HepG2 (cell line): ENCODE measurements at regions of chr6 and their contacts with region 1.

Region 1: DNA sequence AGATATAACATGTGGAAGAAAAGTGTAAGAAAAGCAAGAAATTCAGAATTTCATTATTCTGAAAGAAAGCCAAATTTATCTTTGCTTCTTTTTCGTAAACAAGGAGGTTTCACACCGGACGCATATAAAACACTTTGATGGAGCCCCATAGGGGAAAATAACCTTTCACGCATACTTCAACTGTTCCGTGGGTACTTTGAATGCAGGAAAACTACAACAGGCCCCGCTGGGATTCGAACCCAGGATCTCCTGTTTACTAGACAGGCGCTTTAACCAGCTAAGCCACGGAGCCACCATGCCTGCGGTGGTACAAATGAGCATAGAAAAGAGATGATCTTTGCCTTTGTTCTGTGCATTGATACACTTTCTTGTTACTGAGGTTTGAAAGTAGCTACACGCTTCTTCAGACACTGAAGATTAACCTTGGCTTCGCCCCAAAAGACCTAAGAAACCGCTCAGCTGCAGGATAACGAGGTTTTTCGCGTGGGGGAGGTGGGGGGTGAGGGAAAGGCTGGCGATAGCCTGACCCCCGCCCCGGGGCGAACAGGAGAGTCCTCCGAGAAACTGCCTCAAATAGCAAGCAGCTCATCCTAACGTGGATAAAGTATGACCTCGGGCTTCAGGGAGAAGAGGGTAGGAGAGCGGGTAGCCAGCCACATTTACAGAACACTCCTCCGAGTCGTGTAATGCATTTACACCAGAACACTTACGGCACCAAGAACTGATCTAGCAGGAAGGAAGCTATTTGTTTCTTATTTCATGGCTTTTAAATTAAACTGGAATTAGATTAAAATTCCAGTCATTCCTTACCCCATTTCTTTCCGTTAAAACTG is 5.3 kb upstream of the HMGN4 start:
- DNase-seq: peak; percentile 91
- ATAC-seq: peak; percentile 47
- H3K4me3 ChIP-seq: peak overlapping the region; percentile 67 to 78 (median 77)
- H3K27ac ChIP-seq: peak overlapping the region; percentile 56
- H3K4me1 ChIP-seq: peaks cover 37% of the 10 kb centered on the region
- H3K27me3 ChIP-seq: no peaks in the 10 kb centered on the region
- CTCF ChIP-seq: no peak
- EP300 ChIP-seq: 0 out of 4 replicates have a peak, but pooled peaks of 1 of the 2 experiments have one; percentile 47
- POLR2A ChIP-seq: no peak
- RAD21 ChIP-seq: peak; percentile 26; the same call in 1 of the 2 replicates

Region 2: GRCh38 chr6:26421259-26422144 is 111.4 kb before region 1 on chr6:
- CTCF ChIA-PET with region 1: no interaction called
- POLR2A ChIA-PET with region 1: no interaction called
- in situ Hi-C with region 1: no loop called
- intact Hi-C with region 1: loop called (anchors 2 kb)
- DNase-seq: peak; percentile 93
- ATAC-seq: peak; percentile 99
- H3K4me3 ChIP-seq: peak overlapping the region; percentile 79 to 85 (median 80)
- H3K27ac ChIP-seq: peak overlapping the region; percentile 60
- H3K4me1 ChIP-seq: peaks cover 48% of the 10 kb centered on the region
- H3K27me3 ChIP-seq: no peaks in the 10 kb centered on the region; a peak in 1 of 5 replicates
- CTCF ChIP-seq: peak; percentile 18; the same call in 1 of the 2 replicates
- EP300 ChIP-seq: no peak
- POLR2A ChIP-seq: peak; percentile 46 to 69
- RAD21 ChIP-seq: peak; percentile 26; the same call in 1 of the 2 replicates

Region 3: GRCh38 chr6:26473758-26474438 is 59.0 kb before region 1 on chr6:
- CTCF ChIA-PET with region 1: no interaction called
- POLR2A ChIA-PET with region 1: interaction called, 22 read pairs
- in situ Hi-C with region 1: no loop called
- intact Hi-C with region 1: loop called (anchors 1 kb)
- DNase-seq: peak; percentile 90
- ATAC-seq: peak; percentile 92
- H3K4me3 ChIP-seq: peak overlapping the region; percentile 57 to 84 (median 70)
- H3K27ac ChIP-seq: peak overlapping the region; percentile 83
- H3K4me1 ChIP-seq: peaks cover 61% of the 10 kb centered on the region
- H3K27me3 ChIP-seq: no peaks in the 10 kb centered on the region
- CTCF ChIP-seq: no peak
- EP300 ChIP-seq: no peak
- POLR2A ChIP-seq: peak; percentile 62 to 72
- RAD21 ChIP-seq: no peak

Region 4: GRCh38 chr6:26520853-26521599 is 11.9 kb before region 1 on chr6:
- CTCF ChIA-PET with region 1: no interaction called
- POLR2A ChIA-PET with region 1: interaction called, 8 read pairs
- in situ Hi-C with region 1: no loop called
- intact Hi-C with region 1: loop called (anchors 1 kb)
- DNase-seq: peak; percentile 82
- ATAC-seq: peak; percentile 88
- H3K4me3 ChIP-seq: peak overlapping the region; percentile 62 to 67 (median 62)
- H3K27ac ChIP-seq: peak overlapping the region; percentile 42
- H3K4me1 ChIP-seq: peaks cover 69% of the 10 kb centered on the region
- H3K27me3 ChIP-seq: no peaks in the 10 kb centered on the region
- CTCF ChIP-seq: 0 out of 2 replicates have a peak, but pooled peaks have one; percentile 5
- EP300 ChIP-seq: peak in 1 of 2 experiments; percentile 28; a peak in 1 of 4 replicates
- POLR2A ChIP-seq: peak; percentile 21 to 70
- RAD21 ChIP-seq: no peak

Region 5: DNA sequence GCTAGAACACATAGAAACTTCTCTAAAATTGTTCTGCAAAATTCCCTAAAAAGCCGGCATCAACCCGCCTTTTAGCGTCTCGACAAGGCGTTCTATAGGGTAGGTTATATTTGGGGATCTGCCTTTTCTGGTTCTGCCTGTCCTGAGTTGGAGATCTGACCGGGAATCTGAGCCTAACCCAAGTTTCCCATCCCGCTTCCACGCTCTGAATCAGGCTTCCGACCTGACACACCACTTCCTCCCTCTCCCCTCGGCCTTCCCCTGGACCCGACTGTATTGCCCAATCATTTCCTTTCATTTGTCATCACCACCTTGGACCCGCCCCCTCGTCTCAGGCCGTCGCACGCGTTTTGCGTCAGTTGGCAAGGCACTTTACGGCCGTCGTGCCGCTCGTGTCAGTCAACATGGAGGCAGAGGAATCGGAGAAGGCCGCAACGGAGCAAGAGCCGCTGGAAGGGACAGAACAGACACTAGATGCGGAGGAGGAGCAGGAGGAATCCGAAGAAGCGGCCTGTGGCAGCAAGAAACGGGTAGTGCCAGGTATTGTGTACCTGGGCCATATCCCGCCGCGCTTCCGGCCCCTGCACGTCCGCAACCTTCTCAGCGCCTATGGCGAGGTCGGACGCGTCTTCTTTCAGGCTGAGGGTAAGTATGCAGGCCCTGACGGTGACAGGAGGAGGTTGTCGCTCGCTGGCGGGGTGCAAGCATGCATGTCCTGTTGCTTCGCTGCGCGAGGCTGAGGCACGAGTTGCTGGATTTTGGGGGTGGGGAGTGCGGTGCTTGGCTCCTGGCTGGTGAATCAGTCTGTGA is 63.9 kb after region 1 on chr6 and contains the start of gene ABT1:
- CTCF ChIA-PET with region 1: no interaction called
- POLR2A ChIA-PET with region 1: no interaction called
- in situ Hi-C with region 1: no loop called
- intact Hi-C with region 1: no loop called
- DNase-seq: peak; percentile 99
- ATAC-seq: peak; percentile 74
- H3K4me3 ChIP-seq: peak within 1 kb of the TSS; percentile 87 to 100 (median 88)
- H3K27ac ChIP-seq: peak within 1 kb of the TSS; percentile 80
- H3K4me1 ChIP-seq: peaks cover 31% of the 10 kb centered on the region
- H3K27me3 ChIP-seq: no peaks in the 10 kb centered on the region; a peak in 1 of 5 replicates
- CTCF ChIP-seq: peak; percentile 43
- EP300 ChIP-seq: peak; percentile 42 to 72; a peak in 2 of 4 replicates
- POLR2A ChIP-seq: peak; percentile 86 to 94
- RAD21 ChIP-seq: no peak
- total RNA-seq, gene ABT1: 38.4 and 50.8 TPM in 2 replicates